ENCODE measurements at regions of chr3 and their contacts with region 1.

Region 1: DNA sequence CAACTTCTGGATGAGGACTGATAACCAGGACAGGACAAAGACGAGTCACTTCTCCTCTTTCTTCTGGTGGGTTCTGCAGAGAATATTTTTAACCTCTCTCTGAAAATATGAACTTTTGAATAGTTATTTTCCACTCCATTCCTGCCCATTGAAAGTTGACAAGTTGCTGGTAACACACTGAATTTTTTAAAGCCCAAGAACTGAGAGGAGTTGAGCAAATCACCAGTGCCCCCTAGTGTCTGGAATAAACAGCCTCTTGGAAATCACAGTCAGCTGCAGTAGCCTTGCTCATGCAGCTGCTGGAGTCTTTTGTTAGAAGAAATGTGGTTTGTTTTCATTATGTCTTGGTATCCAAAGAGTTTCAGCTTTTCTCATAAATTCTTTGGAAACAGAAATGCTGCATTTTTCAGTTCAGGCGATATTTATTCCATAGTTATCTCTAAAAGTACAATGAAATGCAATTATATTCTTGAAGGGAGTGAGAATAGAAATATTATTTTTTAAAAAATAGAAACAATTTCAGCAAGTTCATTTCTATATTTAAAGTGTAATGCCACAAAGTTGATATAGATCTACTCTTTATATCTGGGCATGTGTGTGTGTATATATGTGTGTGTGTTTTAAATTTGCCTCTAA is 741.0 kb upstream of the CBLB start:
- DNase-seq: no peak

Region 2: DNA sequence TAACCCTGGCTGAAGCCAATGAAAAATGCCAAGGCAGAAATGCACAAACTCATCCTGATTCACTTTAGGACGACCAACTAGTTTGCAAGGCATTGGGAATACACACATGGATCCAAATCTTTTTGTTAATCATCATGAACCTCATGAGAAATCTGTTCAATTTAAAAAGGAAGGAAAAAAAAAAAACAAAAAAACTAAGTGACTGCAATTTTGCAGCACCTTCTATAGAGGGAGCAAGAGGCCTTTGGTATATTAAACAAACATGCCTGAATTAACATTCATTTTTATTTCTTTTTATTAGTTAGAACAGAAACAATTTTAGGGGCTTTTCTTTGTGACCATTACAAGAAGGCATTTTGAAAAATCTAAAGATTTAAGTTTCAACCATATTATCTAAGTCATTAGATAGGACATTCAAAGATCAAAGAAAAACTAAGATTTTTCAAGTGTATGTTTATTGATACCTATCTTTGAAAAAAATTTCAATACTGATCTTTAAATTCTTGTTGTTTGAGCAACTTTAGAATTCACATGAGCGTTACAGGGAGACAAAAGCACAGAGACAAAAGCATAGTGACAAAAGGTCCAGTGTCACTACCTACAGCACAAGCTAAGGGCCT is 923.4 kb before region 1 on chr3:
- intact Hi-C with region 1: loop called in 1 of 2 experiments (anchors 10 kb)
- DNase-seq: no peak